Activated T-helper 1 cell treated with anti-CD3 and anti-CD28 coated beads, Interleukin-12 subunit alpha, Interleukin-12 subunit beta, Interleukin-2, Interleukin-4 antibody, amounts not matched to agents 30 ng/mL and 10 ng/mL and 1 ng/mL, durations not matched to agents 14 hours and 24 hours and 36 hours (primary cell): ENCODE measurements at regions of chr1 and their contacts with region 1.

Region 1: GRCh38 chr1:91997607-91998195 is 32.1 kb upstream of the EPHX4 start:
- DNase-seq: peak; percentile 2
- H3K4me3 Mint-ChIP-seq: no peak overlapping the region
- H3K27ac Mint-ChIP-seq: no peak overlapping the region
- H3K4me1 Mint-ChIP-seq: no peaks in the 10 kb centered on the region
- H3K27me3 Mint-ChIP-seq: peaks cover 10% of the 10 kb centered on the region

Region 2: GRCh38 chr1:91885213-91885715 is 112.4 kb before region 1 on chr1:
- intact Hi-C with region 1: no loop called
- DNase-seq: peak; percentile 31
- H3K4me3 Mint-ChIP-seq: peak overlapping the region; percentile 98
- H3K27ac Mint-ChIP-seq: peak overlapping the region; percentile 84
- H3K4me1 Mint-ChIP-seq: peaks cover 28% of the 10 kb centered on the region
- H3K27me3 Mint-ChIP-seq: peaks cover 19% of the 10 kb centered on the region

Region 3: GRCh38 chr1:91948501-91949355 is 49.0 kb before region 1 on chr1:
- intact Hi-C with region 1: no loop called
- DNase-seq: peak; percentile 43
- H3K4me3 Mint-ChIP-seq: peak overlapping the region; percentile 31
- H3K27ac Mint-ChIP-seq: peak overlapping the region; percentile 59
- H3K4me1 Mint-ChIP-seq: peaks cover 23% of the 10 kb centered on the region
- H3K27me3 Mint-ChIP-seq: no peaks in the 10 kb centered on the region

Region 4: DNA sequence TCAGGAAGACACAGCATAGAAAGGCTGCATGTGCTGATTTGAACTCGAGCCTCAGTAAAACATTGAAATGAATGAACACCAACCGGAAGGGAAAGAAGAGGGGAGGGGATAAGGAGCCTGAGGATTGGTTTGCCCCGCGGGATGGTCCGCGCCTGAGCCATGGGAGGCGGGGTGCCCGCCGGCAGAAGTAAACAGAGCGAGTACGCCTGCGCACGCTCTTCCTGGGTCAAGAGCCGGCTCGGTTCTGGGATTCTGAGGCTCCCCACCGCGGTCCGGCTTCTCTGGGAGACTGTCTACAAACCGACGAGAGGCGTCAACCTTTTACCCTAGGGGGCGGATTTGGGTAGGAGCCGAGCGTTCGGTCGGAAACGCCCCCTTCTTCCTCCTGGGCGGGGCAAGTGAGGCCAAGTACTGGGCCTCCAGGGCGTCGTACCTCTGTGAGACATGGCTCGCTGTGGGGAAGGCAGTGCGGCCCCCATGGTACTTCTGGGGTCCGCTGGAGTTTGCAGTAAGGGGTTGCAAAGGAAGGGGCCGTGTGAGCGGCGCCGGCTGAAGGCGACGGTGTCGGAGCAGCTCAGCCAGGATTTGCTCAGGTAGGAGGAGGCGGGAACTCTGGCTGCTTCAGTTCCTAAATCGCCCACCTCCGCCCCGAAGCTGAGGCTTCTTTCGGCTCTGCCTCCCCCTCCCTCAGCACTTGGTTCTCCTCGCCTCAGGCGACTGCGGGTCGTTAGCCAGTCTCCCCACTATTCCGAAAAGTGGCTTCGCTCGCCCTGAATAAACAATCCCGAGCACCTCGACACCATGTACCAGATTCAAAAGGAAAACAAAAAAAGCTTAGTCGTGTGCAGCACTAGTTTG is 82.7 kb after region 1 on chr1 and contains the start of gene BTBD8:
- intact Hi-C with region 1: no loop called
- DNase-seq: peak; percentile 79
- H3K4me3 Mint-ChIP-seq: peak within 1 kb of the TSS; percentile 86
- H3K27ac Mint-ChIP-seq: peak within 1 kb of the TSS; percentile 85
- H3K4me1 Mint-ChIP-seq: peaks cover 13% of the 10 kb centered on the region
- H3K27me3 Mint-ChIP-seq: no peaks in the 10 kb centered on the region
- total RNA-seq, gene BTBD8: 0.91 and 1.0 TPM in 2 replicates

Region 5: DNA sequence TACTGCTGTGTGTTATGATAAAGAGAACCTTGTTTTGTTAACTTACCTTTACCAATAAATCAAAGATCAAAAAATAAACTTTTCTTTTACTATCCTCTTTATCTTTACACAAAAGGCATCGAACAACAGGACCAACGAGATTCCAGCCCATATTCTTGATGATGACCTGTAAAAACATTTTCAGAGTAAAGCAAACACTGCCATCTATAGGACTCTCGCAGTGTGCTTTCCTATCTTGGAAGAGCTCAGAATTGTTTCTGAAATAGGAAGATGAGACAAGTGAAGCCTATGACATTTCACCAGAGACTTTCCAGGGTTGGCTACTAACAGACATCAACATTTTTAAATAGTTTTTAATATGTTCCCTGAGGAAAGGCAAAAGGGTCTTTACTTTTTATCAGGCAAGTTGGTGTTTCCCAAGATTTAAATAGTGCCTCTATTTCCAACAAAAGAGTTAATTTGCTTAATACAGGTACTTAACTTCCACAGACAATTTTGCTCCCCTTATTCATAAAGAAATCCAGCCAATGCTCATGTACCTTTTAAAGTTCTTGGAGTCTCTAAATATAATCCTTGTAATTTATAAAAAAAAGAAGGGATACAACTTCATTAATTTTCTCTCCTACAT is 293.8 kb after region 1 on chr1:
- intact Hi-C with region 1: loop called (anchors 1 kb)
- DNase-seq: no peak
- H3K4me3 Mint-ChIP-seq: no peak overlapping the region
- H3K27ac Mint-ChIP-seq: no peak overlapping the region
- H3K4me1 Mint-ChIP-seq: peaks cover 35% of the 10 kb centered on the region
- H3K27me3 Mint-ChIP-seq: no peaks in the 10 kb centered on the region

Region 6: GRCh38 chr1:92817986-92818764 is 820.5 kb after region 1 on chr1:
- intact Hi-C with region 1: loop called (anchors 1 kb)
- DNase-seq: no peak
- H3K4me3 Mint-ChIP-seq: no peak overlapping the region
- H3K27ac Mint-ChIP-seq: no peak overlapping the region
- H3K4me1 Mint-ChIP-seq: no peaks in the 10 kb centered on the region
- H3K27me3 Mint-ChIP-seq: peaks cover 23% of the 10 kb centered on the region